Posterior vena cava (tissue), 2 donors: ENCODE measurements at regions of chr7 and their contacts with region 1.

Region 1: GRCh38 chr7:157734676-157735640 is 398.2 kb downstream of the DNAJB6 start:
- DNase-seq: no peak

Region 2: DNA sequence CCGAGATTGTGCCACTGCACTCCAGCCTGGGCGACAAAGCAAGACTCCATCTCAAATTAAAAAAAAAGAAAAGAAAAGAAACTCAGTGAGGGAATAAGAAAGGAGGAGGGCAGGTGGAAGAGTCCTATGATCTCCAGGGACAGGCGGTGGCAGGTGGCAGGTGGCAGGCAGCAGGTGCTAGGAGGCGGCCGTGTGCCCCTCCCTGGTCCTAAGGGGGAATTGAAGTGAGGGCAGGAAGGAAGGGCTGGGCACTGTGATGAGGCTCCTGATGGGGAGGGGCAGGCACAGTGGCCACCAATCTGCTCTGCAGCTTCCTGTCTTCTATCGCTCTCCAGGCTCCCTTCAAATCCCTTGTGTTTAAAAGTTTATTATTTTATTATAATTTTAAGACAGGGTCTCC is 637.4 kb before region 1 on chr7:
- intact Hi-C with region 1: no loop called
- DNase-seq: no peak

Region 3: DNA sequence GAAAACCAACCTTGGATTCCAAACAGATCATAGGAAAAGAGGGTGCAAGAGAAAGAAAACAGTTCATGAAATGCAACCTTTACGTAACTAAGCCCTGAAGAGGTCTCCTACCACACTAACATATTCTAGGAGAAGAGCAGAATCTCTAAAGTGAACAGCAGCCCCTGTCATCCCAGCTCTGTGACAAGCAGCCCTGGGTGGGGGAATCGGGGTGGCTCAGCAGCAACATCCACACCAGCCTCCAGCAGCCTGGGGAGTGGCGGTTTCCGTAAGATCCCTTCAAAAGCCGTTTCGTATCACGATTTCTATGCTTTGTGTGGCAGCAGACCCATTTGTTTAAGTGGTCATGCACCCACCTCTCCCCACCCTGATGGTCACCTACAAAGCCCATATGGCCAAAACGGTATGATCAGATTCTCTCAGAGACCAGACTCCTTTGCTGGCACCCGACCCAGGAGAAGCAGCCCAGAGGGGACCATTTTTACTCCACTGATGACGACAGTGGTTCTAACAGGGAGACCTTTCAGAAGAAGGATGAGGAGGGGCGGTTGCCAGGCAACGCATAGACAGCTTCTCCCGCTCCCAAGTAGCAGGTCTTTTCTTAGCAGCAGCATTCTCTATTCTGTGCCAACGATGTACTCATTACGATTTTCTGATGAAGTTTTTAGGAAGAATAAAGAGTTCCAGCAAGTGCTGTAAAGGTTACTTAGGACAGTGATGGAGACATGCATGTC is 97.6 kb before region 1 on chr7:
- intact Hi-C with region 1: no loop called
- DNase-seq: no peak

Region 4: GRCh38 chr7:157801113-157801512 is 66.2 kb after region 1 on chr7:
- intact Hi-C with region 1: loop called in 1 of 2 experiments (anchors 2 kb)
- DNase-seq: no peak